HAP-1 (cell line): ENCODE measurements at regions of chr12 and their contacts with region 1.

Region 1: DNA sequence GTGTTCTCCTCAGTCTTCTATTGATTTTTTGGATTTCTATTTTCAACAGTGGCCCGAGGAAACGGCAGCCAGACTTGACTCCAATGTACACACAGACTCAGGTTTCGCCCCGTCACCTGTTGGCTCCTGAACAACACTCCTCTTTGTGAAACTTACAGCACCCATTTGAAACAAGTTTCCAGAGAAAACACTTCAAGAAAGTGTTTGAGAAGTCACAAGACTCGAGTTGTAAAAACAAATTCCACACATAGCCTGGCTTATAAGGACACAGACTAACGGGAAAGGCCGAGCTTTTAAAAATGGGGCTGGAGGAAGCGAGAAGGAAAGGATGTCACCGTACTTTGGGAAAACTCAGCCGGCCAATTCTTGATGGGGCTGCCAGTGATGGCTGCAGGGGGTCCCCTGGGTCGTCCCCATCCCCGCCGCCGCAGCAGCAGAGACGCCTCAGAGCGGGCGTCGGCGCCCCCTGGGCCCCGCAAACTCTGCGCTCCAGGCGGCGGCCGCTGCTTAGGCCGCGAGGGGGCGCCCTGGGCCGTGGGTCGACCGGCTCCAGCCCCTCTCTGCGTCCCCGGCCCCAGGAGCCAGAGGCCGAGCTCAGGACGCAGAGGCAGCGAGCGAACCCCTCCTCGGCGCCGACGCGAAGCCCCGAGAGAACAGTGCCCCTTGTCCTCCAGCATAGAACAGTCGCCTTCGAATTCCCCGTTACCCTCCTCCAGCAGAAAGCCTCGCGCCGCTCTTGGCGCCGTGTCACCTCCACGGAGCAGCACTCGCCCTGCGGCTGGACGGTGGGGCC is 106.9 kb downstream of the PRICKLE1 start:
- DNase-seq: peak; percentile 72 to 89
- H3K4me3 ChIP-seq: peak overlapping the region; percentile 60
- H3K4me1 ChIP-seq: peaks cover 44% of the 10 kb centered on the region
- H3K27me3 ChIP-seq: no peaks in the 10 kb centered on the region

Region 2: DNA sequence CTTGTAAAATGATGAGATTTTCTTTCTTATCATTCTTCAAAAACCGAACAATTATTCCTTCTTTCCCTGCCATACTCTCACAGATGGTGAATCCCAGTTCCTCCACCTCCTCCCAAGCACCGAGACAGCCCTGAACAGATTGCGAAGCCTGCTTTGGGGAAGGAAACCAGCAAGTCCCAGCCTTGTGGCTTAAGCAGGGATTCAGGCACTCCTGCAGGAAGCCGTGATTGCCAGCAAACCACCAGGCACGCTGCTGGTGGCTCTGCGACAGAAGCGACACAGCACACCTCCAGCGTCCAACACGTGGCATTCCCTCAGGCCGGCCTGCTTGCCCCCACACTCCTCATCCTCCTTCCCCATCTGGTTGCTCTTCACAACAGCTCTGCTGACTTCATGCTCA is 575.6 kb before region 1 on chr12:
- in situ Hi-C with region 1: no loop called
- DNase-seq: no peak
- H3K4me3 ChIP-seq: no peak overlapping the region
- H3K4me1 ChIP-seq: peaks cover 13% of the 10 kb centered on the region
- H3K27me3 ChIP-seq: no peaks in the 10 kb centered on the region

Region 3: DNA sequence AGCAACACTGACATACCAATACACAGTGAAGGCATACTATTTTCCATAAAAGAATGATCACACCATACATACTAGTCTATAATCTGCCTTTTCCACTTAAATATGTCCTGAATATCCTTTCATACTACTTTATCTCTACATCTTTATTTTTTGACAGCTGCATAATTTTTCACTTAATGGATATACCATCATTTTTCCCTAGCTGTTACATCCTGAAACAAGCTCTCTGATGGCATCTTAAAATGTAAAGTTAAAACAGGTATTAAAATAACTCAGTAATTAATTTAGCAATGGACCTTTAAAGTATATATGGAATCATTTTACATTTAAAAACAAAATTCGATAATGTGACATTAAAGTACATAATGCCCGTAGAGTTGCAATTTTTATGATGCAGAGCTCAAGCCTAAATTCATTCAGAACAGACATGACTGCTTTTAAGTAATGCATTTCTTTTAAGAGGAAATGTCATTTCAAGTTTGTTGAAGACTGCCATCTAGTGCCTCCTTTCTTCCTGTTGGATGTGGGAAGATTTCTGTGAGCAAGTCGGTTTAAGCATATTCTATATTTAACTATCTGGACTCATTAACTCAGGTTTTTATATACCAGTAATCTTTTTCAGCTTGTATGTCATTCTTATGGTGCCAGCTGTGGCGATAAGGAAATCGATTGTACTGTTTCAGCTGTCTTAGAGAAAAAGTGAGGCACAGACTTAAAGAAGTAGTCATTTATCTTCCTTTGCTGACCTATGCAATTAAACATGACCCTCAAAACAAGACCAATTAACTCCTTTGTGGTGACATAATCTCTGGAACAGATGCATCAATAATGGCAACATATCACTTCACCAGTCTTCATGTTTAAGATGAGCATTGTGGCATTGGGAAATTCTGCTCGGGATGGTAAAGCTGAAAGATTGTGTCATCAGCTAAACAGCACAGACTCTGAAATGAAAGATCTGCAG is 86.6 kb after region 1 on chr12:
- in situ Hi-C with region 1: loop called (anchors 10 kb)
- DNase-seq: peak in 1 of 2 experiments; percentile 76
- H3K4me3 ChIP-seq: no peak overlapping the region
- H3K4me1 ChIP-seq: peaks cover 32% of the 10 kb centered on the region
- H3K27me3 ChIP-seq: no peaks in the 10 kb centered on the region

Region 4: DNA sequence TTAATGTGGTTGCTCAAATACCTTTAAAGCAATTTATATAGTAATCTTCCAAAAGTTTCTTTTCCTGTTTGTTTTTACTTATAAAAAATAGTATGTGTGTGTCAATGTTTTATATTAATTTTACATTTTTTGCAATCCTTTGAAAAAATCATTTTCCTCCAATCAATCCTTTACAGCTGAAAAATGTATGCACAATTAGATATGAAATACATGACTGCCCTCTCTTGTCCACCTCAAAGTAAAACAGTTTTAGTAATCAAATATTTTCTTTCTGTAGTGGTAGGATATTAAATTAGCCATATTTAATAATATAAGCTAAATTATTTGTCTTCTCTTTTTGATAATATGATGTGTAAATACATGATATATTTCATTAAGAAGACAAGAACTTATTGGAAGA is 799.5 kb after region 1 on chr12:
- in situ Hi-C with region 1: loop called (anchors 25 kb)
- DNase-seq: peak in 1 of 2 experiments; percentile 67
- H3K4me3 ChIP-seq: no peak overlapping the region
- H3K4me1 ChIP-seq: peaks cover 14% of the 10 kb centered on the region; the same call in 1 of the 2 replicates
- H3K27me3 ChIP-seq: no peaks in the 10 kb centered on the region